ENCODE measurements at regions of chr11 and their contacts with region 1.

Region 1: GRCh38 chr11:59560702-59561469 is 49.5 kb downstream of the OR4D9 start:
- DNase-seq: peak; percentile 75 to 86 (median 77)
- H3K4me3 ChIP-seq: peak overlapping the region; percentile 83 to 87
- H3K4me3 Mint-ChIP-seq: peak overlapping the region; percentile 93 to 99 (median 96)
- H3K27ac ChIP-seq: peak overlapping the region; percentile 58
- H3K27ac Mint-ChIP-seq: peak overlapping the region; percentile 91 to 100 (median 98)
- H3K4me1 ChIP-seq: peaks cover 21% of the 10 kb centered on the region
- H3K4me1 Mint-ChIP-seq: peaks cover 27 to 53% (median 39%) of the 10 kb centered on the region in 4 donors
- H3K27me3 ChIP-seq: no peaks in the 10 kb centered on the region
- H3K27me3 Mint-ChIP-seq: peaks cover 2 to 5% of the 10 kb centered on the region in 2 donors

Region 2: DNA sequence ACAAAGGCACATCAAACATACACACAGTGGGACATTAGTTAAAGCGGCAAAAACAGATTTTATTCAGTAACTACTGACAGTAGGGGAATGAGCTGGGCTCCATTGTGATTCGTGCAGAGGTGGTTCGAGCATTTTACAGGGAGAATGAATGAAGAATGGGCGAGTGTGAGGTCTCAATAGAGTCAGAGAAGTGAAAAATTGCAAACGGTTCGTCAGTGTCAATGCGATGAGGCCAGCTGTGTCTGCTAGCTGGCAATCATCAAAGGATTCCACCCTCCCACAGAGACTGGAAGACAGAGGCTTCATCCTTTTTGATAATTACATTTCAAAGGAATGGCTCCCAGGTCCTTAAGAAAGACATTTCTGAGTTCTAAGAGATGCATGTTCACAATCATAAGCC is 32.2 kb before region 1 on chr11:
- CTCF ChIA-PET with region 1: no interaction called
- POLR2A ChIA-PET with region 1: no interaction called
- intact Hi-C with region 1: no loop called
- DNase-seq: no peak
- H3K4me3 ChIP-seq: no peak overlapping the region
- H3K4me3 Mint-ChIP-seq: no peak overlapping the region
- H3K27ac ChIP-seq: no peak overlapping the region
- H3K27ac Mint-ChIP-seq: no peak overlapping the region
- H3K4me1 ChIP-seq: no peaks in the 10 kb centered on the region
- H3K4me1 Mint-ChIP-seq: no peaks in the 10 kb centered on the region
- H3K27me3 ChIP-seq: no peaks in the 10 kb centered on the region
- H3K27me3 Mint-ChIP-seq: peaks cover 4 to 11% of the 10 kb centered on the region in 2 donors

Region 3: GRCh38 chr11:59550368-59550841 is 10.5 kb before region 1 on chr11:
- CTCF ChIA-PET with region 1: interaction called, 12 read pairs
- POLR2A ChIA-PET with region 1: interaction called, 76 read pairs
- intact Hi-C with region 1: loop called (anchors 1 kb)
- DNase-seq: peak; percentile 86 to 94 (median 87)
- H3K4me3 ChIP-seq: peak overlapping the region; percentile 19 to 61
- H3K4me3 Mint-ChIP-seq: peak overlapping the region; percentile 86 to 96 (median 88)
- H3K27ac ChIP-seq: peak overlapping the region; percentile 51
- H3K27ac Mint-ChIP-seq: peak overlapping the region; percentile 92 to 100 (median 94)
- H3K4me1 ChIP-seq: peaks cover 14% of the 10 kb centered on the region
- H3K4me1 Mint-ChIP-seq: peaks cover 16 to 52% (median 26%) of the 10 kb centered on the region in 4 donors
- H3K27me3 ChIP-seq: no peaks in the 10 kb centered on the region
- H3K27me3 Mint-ChIP-seq: peaks cover 0 to 9% of the 10 kb centered on the region in 2 donors